Esophagus squamous epithelium (tissue), 5 donors: ENCODE measurements at regions of chr20 and their contacts with region 1.

Region 1: DNA sequence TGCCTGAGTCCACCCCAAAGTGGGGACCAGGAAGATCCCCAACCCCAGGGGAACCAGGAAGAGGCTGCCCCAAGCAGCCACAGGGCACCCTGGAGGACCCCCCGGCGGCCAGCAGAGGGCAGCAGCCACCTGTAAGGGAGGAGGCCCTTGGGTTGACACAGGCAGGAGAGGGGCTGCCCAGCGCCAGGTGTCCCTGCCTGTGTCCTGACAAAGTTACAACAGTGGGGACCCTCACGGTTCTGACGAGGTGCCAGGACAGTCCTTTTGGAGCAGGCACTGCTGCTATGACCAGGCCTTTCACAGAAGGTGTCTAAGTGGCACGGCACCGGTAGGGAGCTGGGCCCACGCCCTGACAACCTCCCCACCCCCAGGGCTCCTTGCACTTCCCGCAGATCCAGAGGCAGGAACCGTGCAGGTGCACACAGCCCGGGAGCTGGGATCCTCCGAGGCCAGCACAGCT is 176.7 kb downstream of the BMP7 start:
- DNase-seq: no peak
- H3K4me3 ChIP-seq: peak overlapping the region in 1 of 4 donors; percentile 22
- H3K27ac ChIP-seq: no peak overlapping the region
- H3K4me1 ChIP-seq: peaks cover 4 to 21% (median 7%) of the 10 kb centered on the region in 3 donors
- H3K27me3 ChIP-seq: peaks cover 0 to 49% (median 0%) of the 10 kb centered on the region in 4 donors
- CTCF ChIP-seq: peak; percentile 55 to 96 (median 92)
- POLR2A ChIP-seq: no peak

Region 2: DNA sequence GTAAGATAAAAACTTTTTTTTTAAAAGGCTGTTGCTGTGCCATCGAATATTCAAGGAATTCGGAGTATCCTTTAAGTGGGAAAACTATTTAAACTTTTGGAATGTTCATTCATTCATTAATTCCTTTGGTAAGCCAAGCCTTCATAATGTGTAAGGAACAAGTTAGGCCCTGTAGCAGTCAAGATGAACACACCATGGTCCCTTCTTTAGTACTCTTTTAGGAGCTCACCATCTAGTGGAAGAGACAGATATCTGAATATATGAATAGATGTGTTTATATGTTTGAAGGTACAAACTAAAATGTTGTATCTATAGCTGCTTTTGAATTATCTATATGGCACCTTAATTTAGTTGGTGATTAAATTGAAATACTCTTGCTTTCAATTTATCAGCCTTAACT is 245.7 kb after region 1 on chr20:
- intact Hi-C with region 1: loop called (anchors 5 kb)
- DNase-seq: no peak
- H3K4me3 ChIP-seq: no peak overlapping the region
- H3K27ac ChIP-seq: no peak overlapping the region
- H3K4me1 ChIP-seq: no peaks in the 10 kb centered on the region
- H3K27me3 ChIP-seq: peaks cover 0 to 55% (median 1%) of the 10 kb centered on the region in 4 donors
- CTCF ChIP-seq: peak in 2 of 6 experiments; percentile 24 to 41
- POLR2A ChIP-seq: no peak

Region 3: DNA sequence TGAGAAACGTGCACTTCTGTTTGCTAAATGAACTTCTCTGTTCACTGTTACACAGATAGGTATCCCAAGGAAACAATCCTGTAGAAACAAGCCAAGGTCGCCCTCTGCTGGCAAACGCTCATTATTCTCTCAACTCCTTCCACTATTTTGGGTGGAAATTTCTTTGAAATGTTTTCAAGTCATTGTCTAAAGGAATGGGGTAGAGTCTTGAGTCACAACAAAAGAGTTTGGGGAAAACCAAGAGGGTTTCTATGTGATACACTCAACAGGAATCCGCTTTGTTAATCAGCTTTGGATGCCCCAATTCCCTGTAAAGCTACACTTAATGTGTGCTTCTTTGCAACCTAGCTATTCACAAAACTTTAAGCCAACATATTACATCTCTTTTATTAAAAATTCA is 256.8 kb after region 1 on chr20:
- intact Hi-C with region 1: loop called (anchors 5 kb)
- DNase-seq: no peak
- H3K4me3 ChIP-seq: no peak overlapping the region
- H3K27ac ChIP-seq: no peak overlapping the region
- H3K4me1 ChIP-seq: peaks cover 0 to under 1% (median under 1%) of the 10 kb centered on the region in 3 donors
- H3K27me3 ChIP-seq: peaks cover 0 to 14% (median 0%) of the 10 kb centered on the region in 4 donors
- CTCF ChIP-seq: peak; percentile 50 to 80 (median 75)
- POLR2A ChIP-seq: no peak